Ovary (tissue), 10 donors: ENCODE measurements at regions of chr17 and their contacts with region 1.

Region 1: GRCh38 chr17:42527273-42527703 is 8.8 kb upstream of the NAGLU start:
- DNase-seq: peak; percentile 71 to 84 (median 78)
- H3K4me3 ChIP-seq: no peak overlapping the region
- H3K27ac ChIP-seq: no peak overlapping the region
- H3K4me1 ChIP-seq: peaks cover 23% of the 10 kb centered on the region
- H3K27me3 ChIP-seq: no peaks in the 10 kb centered on the region
- CTCF ChIP-seq: peak; percentile 72 to 89 (median 81)
- EP300 ChIP-seq: no peak
- POLR2A ChIP-seq: peak; percentile 38

Region 2: DNA sequence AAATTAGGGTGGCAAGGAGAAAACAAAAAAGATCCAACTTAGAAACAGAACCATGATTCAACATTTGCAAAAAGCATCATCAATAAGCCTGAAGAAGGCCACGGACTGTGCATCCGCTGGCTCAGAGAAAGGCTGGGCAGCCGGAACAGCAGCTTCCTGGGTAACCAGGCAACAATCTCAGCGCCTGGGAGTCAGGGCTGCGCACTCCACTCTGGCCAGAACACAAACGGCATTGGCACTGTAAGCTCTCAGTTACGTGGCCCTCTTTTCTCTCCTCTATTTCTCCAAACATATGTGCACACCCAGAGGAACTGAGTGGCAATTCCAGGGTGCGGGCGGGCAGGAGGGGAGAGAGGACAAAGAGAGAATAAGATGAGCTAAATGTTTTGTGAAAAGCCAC is 326.6 kb before region 1 on chr17:
- intact Hi-C with region 1: no loop called
- DNase-seq: peak; percentile 72 to 81 (median 75)
- H3K4me3 ChIP-seq: no peak overlapping the region
- H3K27ac ChIP-seq: peak overlapping the region in 1 of 2 donors; percentile 39
- H3K4me1 ChIP-seq: no peaks in the 10 kb centered on the region
- H3K27me3 ChIP-seq: no peaks in the 10 kb centered on the region
- CTCF ChIP-seq: no peak
- EP300 ChIP-seq: no peak
- POLR2A ChIP-seq: no peak

Region 3: DNA sequence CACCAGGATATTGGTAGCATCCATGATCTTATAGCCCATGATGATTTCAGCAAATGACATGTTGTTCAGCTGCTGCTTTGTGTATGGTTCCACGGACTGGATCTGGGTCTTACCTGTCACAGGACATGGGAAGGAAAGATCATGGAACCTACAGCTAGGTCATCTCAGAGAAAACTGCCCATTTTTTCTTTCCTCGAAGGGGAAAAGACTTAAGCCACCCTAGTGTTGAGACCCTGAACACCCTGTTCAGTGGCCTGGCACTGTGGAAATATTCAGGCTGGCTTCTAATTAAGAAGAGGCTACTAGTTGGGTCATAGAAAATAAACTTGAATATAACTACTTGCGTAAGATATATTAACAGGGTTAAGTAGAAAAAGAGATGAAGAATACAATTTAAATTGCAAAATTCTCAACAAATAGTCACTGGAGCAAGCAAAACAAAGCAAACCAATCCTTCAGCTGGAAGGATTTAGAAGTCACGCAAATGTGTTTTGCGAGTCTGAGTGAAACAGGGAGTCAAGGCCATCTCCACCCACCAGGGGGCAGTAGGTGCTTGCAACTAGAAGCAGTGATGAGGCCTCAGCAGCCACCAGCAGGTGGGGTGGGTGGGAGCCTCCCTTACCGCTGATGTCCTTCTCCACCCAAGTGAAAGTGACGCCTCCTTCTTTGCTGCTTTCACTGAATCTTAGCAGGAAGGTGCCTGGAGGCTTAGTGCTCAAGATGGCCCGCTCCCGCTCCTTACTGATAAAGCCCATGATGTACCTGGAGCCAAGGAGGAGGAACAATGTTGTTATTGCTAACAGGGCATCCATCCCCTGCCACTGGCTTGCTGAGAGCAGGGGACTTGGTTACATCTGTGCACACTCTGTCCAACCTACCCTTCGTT is 204.7 kb before region 1 on chr17:
- intact Hi-C with region 1: loop called in 3 of 4 experiments (anchors 2 to 5 kb)
- DNase-seq: peak; percentile 90 to 96 (median 94)
- H3K4me3 ChIP-seq: no peak overlapping the region
- H3K27ac ChIP-seq: no peak overlapping the region
- H3K4me1 ChIP-seq: peaks cover 3% of the 10 kb centered on the region
- H3K27me3 ChIP-seq: no peaks in the 10 kb centered on the region
- CTCF ChIP-seq: peak; percentile 96 to 100 (median 99)
- EP300 ChIP-seq: no peak
- POLR2A ChIP-seq: peak; percentile 42

Region 4: DNA sequence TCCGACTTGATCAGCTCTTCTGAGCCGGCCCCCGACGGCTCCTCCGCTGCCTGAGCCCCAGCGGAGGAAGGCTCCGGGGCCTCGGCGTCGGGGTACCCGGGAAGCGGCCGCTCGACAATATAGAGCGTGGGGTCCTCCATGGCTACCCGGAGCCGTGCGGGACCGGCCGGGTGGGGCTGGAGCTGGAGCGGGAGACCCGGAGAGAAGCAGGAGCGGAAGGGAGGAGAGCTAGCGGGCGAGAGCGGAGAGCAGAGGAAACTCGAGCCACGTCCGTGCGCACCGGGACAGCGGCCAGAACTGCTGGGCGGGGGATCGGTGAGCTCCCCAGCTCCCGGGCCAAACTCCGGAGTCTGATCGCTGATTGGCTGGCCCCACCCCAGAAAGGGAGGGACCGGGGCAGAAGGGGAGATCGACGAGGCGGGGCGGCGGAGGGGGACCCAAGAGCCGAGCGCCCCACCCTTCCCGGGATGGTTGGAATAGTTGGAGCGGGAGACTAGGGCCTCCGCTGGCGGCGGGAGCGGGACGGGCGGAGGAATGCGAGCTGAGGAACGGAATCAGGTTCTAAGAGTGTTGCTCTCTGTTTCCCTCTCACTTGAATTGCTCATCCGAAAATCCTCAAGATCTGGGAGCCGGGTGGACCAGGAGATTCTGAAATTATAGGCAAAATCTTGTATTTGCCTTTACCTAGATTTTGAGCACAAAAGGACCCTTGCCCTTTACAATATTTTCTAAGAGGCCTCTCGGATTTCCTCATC is 104.2 kb before region 1 on chr17 and contains the start of gene CAVIN1:
- intact Hi-C with region 1: loop called in 1 of 4 experiments (anchors 5 kb)
- DNase-seq: peak; percentile 100
- H3K4me3 ChIP-seq: peak within 1 kb of the TSS; percentile 96
- H3K27ac ChIP-seq: peak within 1 kb of the TSS; percentile 54 to 78
- H3K4me1 ChIP-seq: peaks cover 5% of the 10 kb centered on the region
- H3K27me3 ChIP-seq: no peaks in the 10 kb centered on the region
- CTCF ChIP-seq: no peak
- EP300 ChIP-seq: no peak
- POLR2A ChIP-seq: peak; percentile 95
- total RNA-seq, gene CAVIN1: 122 to 407 (median 281) TPM